GM12878 (cell line): ENCODE measurements at regions of chr3 and their contacts with region 1.

Region 1: DNA sequence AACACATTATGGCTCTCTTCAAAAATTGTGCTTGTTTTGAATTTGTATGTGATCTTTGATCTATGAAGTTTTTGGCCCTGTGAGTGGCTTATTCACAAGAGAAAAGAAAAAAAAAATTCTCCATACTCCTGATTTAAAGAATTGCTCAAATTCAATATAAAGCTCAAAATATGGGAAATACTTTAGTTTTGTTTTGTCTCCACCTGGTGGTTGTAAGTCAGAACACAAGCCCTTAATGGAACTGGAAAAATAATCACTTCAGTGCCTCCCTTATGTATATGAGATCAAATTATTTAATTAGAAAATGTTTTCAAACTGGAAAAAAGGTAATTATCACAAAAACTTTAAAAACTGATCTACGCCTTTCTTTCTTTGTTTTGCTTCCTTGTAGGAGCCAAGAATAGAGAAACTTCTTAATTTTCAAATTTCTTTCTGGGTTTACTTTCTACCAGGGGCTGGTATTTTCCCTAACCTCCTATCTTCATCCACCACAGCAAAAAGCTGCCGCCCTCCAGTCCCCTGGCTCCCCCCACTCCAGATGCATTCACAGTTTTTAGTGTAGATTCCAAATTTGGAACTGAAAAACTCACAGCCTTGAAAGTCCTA is 50.6 kb downstream of the SERP1 start:
- DNase-seq: no peak
- ATAC-seq: peak; percentile 78
- H3K4me3 ChIP-seq: no peak overlapping the region
- H3K27ac ChIP-seq: no peak overlapping the region
- H3K4me1 ChIP-seq: no peaks in the 10 kb centered on the region
- H3K27me3 ChIP-seq: no peaks in the 10 kb centered on the region
- CTCF ChIP-seq: peak; percentile 53 to 72 (median 58)
- EP300 ChIP-seq: no peak
- POLR2A ChIP-seq: no peak
- RAD21 ChIP-seq: peak; percentile 91

Region 2: DNA sequence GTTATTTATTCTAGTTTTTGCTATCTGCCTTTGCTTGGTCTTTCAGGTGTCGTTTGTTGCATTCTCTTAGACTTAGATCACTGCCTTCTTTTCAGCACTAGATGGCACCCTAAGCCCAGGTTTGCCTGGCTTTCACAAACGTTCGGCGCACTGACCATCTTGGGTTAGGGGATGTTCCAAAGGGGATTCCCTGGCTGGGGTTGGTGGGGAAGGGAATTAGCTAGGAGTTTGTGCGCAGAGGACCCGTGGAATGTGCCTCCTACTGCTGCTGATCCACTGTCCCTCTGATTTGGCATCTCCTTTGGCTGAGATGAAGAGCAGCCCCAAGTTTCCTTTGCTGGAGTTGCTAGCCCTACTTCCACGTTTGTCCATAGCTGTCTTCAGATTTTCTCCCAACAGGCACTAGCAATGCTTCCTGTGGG is 558.8 kb before region 1 on chr3:
- CTCF ChIA-PET with region 1: interaction called, 3 read pairs
- POLR2A ChIA-PET with region 1: no interaction called
- RAD21 ChIA-PET with region 1: interaction called, 3 read pairs
- SMC1A ChIA-PET with region 1: no interaction called
- in situ Hi-C with region 1: no loop called
- intact Hi-C with region 1: loop called (anchors 5 kb)
- DNase-seq: peak; percentile 37
- ATAC-seq: peak; percentile 93
- H3K4me3 ChIP-seq: no peak overlapping the region
- H3K27ac ChIP-seq: no peak overlapping the region
- H3K4me1 ChIP-seq: no peaks in the 10 kb centered on the region
- H3K27me3 ChIP-seq: no peaks in the 10 kb centered on the region
- CTCF ChIP-seq: peak; percentile 79 to 87 (median 82)
- EP300 ChIP-seq: no peak
- POLR2A ChIP-seq: no peak
- RAD21 ChIP-seq: peak; percentile 80

Region 3: GRCh38 chr3:150227839-150228238 is 267.8 kb before region 1 on chr3:
- CTCF ChIA-PET with region 1: interaction called, 40 read pairs
- POLR2A ChIA-PET with region 1: no interaction called
- RAD21 ChIA-PET with region 1: interaction called, 31 read pairs
- SMC1A ChIA-PET with region 1: interaction called, 37 read pairs
- in situ Hi-C with region 1: loop called (anchors 5 kb)
- intact Hi-C with region 1: loop called (anchors 1 kb)
- DNase-seq: no peak
- ATAC-seq: peak; percentile 94
- H3K4me3 ChIP-seq: no peak overlapping the region
- H3K27ac ChIP-seq: no peak overlapping the region
- H3K4me1 ChIP-seq: no peaks in the 10 kb centered on the region
- H3K27me3 ChIP-seq: 0 out of 4 replicates have a peak, but pooled peaks cover 0 to 3% of the 10 kb centered on the region in 2 experiments
- CTCF ChIP-seq: peak; percentile 71 to 81 (median 80)
- EP300 ChIP-seq: no peak
- POLR2A ChIP-seq: no peak
- RAD21 ChIP-seq: peak; percentile 87

Region 4: DNA sequence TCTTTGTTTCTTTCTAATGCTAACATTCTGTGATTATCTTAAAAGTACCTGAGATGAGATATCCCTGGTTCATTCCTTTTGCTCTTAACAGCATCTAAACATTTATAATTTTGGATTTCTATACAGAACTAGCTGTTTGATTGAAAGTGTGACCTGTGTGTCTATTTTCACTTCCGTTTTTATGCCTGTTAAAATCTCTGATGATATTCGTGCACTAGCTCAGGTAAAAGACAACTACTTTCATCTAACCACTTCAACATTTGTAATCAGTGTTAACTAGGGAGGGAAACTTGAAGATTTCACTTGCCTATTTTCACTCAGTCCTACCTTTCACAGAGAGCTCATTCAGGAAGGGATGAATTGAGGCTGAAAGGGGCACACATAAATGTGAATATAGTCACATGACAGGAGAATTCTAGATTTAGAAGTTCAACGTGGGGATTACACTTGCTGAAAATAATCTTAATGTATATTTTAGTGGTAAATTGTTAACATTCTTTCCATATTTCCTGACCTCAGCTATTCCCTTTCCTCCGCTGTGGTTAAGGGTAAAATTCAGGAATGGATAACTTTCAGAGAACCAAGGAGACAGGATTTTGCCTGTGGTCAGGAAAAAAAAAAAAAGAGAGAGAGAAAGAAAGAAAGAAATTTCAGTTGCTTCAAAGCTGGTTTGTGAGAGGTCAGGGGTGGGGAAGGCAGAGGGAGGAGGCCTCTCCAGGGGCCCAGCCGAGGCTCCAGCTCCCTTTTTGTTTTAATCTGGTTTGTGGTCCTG is 247.4 kb before region 1 on chr3:
- CTCF ChIA-PET with region 1: interaction called, 9 read pairs
- POLR2A ChIA-PET with region 1: no interaction called
- RAD21 ChIA-PET with region 1: interaction called, 5 read pairs
- SMC1A ChIA-PET with region 1: interaction called, 10 read pairs
- in situ Hi-C with region 1: no loop called
- intact Hi-C with region 1: no loop called
- DNase-seq: no peak
- ATAC-seq: peak; percentile 81
- H3K4me3 ChIP-seq: no peak overlapping the region
- H3K27ac ChIP-seq: no peak overlapping the region
- H3K4me1 ChIP-seq: 0 out of 2 replicates have a peak, but pooled peaks cover 3% of the 10 kb centered on the region
- H3K27me3 ChIP-seq: no peaks in the 10 kb centered on the region
- CTCF ChIP-seq: no peak
- EP300 ChIP-seq: 0 out of 4 replicates have a peak, but pooled peaks of 1 of the 2 experiments have one; percentile 40
- POLR2A ChIP-seq: no peak
- RAD21 ChIP-seq: no peak

Region 5: GRCh38 chr3:150299201-150299600 is 196.5 kb before region 1 on chr3:
- CTCF ChIA-PET with region 1: interaction called, 12 read pairs
- POLR2A ChIA-PET with region 1: no interaction called
- RAD21 ChIA-PET with region 1: interaction called, 10 read pairs
- SMC1A ChIA-PET with region 1: interaction called, 5 read pairs
- in situ Hi-C with region 1: loop called (anchors 5 kb)
- intact Hi-C with region 1: no loop called
- DNase-seq: no peak
- ATAC-seq: no peak
- H3K4me3 ChIP-seq: no peak overlapping the region
- H3K27ac ChIP-seq: no peak overlapping the region
- H3K4me1 ChIP-seq: no peaks in the 10 kb centered on the region
- H3K27me3 ChIP-seq: no peaks in the 10 kb centered on the region; a peak in 1 of 4 replicates
- CTCF ChIP-seq: no peak
- EP300 ChIP-seq: no peak
- POLR2A ChIP-seq: no peak
- RAD21 ChIP-seq: no peak

Region 6: GRCh38 chr3:150421799-150422548 is 73.7 kb before region 1 on chr3:
- CTCF ChIA-PET with region 1: interaction called, 10 read pairs
- POLR2A ChIA-PET with region 1: no interaction called
- RAD21 ChIA-PET with region 1: interaction called, 6 read pairs
- SMC1A ChIA-PET with region 1: interaction called, 5 read pairs
- in situ Hi-C with region 1: no loop called
- intact Hi-C with region 1: no loop called
- DNase-seq: no peak
- ATAC-seq: peak; percentile 51
- H3K4me3 ChIP-seq: no peak overlapping the region
- H3K27ac ChIP-seq: no peak overlapping the region
- H3K4me1 ChIP-seq: no peaks in the 10 kb centered on the region
- H3K27me3 ChIP-seq: no peaks in the 10 kb centered on the region
- CTCF ChIP-seq: peak in 1 of 3 experiments; percentile 31; a peak in 1 of 6 replicates
- EP300 ChIP-seq: no peak
- POLR2A ChIP-seq: no peak
- RAD21 ChIP-seq: no peak

Region 7: DNA sequence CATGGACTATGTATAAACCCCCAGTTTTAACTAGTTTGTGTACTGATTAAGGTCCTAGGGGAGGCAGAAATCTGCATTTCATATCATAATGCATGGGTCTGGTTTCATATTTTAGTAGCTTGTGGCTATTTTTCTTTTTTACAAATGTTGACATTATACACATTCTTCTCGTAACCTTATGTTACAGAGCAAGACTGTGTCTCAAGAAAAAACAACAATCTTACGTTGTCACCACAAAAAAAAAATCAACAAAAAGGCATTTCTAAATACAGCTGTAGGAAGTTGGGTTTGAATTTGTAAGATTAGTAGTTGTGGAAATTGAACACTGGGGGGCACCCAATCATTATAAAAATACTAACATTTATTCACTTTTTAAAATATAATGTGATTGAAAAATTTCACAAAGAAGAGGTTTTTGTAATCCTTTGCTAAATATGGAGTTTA is 32.7 kb after region 1 on chr3:
- CTCF ChIA-PET with region 1: no interaction called
- POLR2A ChIA-PET with region 1: no interaction called
- RAD21 ChIA-PET with region 1: no interaction called
- SMC1A ChIA-PET with region 1: no interaction called
- in situ Hi-C with region 1: no loop called
- intact Hi-C with region 1: no loop called
- DNase-seq: no peak
- ATAC-seq: peak; percentile 54
- H3K4me3 ChIP-seq: no peak overlapping the region
- H3K27ac ChIP-seq: no peak overlapping the region
- H3K4me1 ChIP-seq: no peaks in the 10 kb centered on the region
- H3K27me3 ChIP-seq: no peaks in the 10 kb centered on the region
- CTCF ChIP-seq: peak; percentile 13 to 48 (median 33); a peak in 4 of 6 replicates
- EP300 ChIP-seq: no peak
- POLR2A ChIP-seq: no peak
- RAD21 ChIP-seq: peak; percentile 48